Endothelial cell of umbilical vein (primary cell): ENCODE measurements at regions of chr2 and their contacts with region 1.

Region 1: DNA sequence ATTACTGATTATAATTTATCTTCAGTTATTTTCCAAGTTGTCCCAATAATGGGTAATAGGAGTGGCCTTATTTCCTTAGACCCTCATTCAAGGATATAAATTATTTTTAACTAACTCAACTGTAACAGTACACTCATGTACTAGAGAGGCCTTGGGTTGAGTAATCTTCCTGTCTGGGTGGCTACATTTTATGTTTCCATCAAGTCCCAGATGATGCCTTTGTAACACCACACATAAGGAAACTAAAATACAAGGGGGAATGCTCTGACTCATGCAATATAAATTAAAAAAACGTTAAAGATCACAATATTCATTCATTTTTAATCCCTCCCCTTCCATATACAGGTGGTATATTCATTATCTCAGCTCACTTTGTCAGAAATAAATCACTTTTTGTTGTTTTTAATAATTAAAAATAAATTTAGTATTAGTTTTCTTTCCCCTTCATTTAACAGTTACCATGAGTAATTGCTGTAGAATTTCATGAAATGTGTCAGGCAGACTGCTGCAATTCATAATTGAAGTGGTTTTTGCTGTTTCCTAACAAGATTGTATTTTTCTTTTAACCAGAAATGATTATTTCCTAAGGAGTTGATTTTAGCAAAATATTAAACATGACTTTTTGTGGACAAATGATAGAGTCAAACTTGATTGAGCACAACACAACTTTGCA is 1403.6 kb downstream of the SUCLG1 start:
- DNase-seq: peak; percentile 93
- H3K4me3 ChIP-seq: peak overlapping the region in 1 of 3 experiments; percentile 15
- H3K27ac ChIP-seq: peak overlapping the region; percentile 97
- H3K4me1 ChIP-seq: peaks cover 36% of the 10 kb centered on the region
- H3K27me3 ChIP-seq: no peaks in the 10 kb centered on the region
- CTCF ChIP-seq: no peak
- POLR2A ChIP-seq: no peak

Region 2: DNA sequence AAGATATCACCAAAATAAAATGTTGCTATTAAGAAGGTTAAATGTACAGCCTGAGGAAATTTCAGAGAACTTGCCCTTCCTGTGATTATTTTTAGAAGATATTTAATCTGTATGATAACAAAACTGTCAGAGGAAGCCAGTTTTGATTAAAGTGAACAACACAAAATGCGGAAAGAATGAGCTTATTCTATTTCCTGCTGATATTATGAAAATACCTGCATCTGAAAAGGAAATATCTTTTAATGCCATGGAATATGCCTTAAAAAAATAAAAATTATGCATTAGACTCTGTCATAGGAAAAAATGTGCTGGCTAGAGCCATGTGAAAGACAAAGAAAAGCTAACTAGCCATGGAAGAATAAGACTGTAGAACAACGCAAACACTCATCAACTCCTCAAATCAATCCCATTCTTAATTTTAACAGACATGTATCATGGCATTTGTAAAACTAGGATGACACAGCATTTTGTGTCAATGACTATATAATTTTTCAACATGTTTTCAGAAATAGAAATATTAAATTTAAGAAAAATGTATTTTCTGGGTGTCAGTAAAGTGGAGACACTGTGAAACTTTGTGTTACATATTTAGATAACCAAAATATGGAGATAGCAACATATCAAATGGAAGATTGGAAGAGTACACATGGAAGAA is 364.6 kb before region 1 on chr2:
- CTCF ChIA-PET with region 1: no interaction called
- POLR2A ChIA-PET with region 1: no interaction called
- dilution Hi-C with region 1: no loop called
- intact Hi-C with region 1: loop called (anchors 1 kb)
- DNase-seq: peak; percentile 93
- H3K4me3 ChIP-seq: no peak overlapping the region
- H3K27ac ChIP-seq: peak overlapping the region; percentile 68
- H3K4me1 ChIP-seq: peaks cover 34% of the 10 kb centered on the region
- H3K27me3 ChIP-seq: no peaks in the 10 kb centered on the region
- CTCF ChIP-seq: no peak
- POLR2A ChIP-seq: peak; percentile 41

Region 3: GRCh38 chr2:83103602-83104001 is 48.1 kb after region 1 on chr2:
- CTCF ChIA-PET with region 1: no interaction called
- POLR2A ChIA-PET with region 1: no interaction called
- dilution Hi-C with region 1: no loop called
- intact Hi-C with region 1: loop called (anchors 1 kb)
- DNase-seq: peak; percentile 91
- H3K4me3 ChIP-seq: no peak overlapping the region
- H3K27ac ChIP-seq: peak overlapping the region; percentile 86
- H3K4me1 ChIP-seq: peaks cover 24% of the 10 kb centered on the region
- H3K27me3 ChIP-seq: no peaks in the 10 kb centered on the region
- CTCF ChIP-seq: no peak
- POLR2A ChIP-seq: no peak

Region 4: GRCh38 chr2:83665894-83666293 is 610.4 kb after region 1 on chr2:
- CTCF ChIA-PET with region 1: no interaction called
- POLR2A ChIA-PET with region 1: no interaction called
- dilution Hi-C with region 1: no loop called
- intact Hi-C with region 1: loop called (anchors 10 kb)
- DNase-seq: peak; percentile 75
- H3K4me3 ChIP-seq: no peak overlapping the region
- H3K27ac ChIP-seq: peak overlapping the region; percentile 87
- H3K4me1 ChIP-seq: peaks cover 7% of the 10 kb centered on the region
- H3K27me3 ChIP-seq: no peaks in the 10 kb centered on the region
- CTCF ChIP-seq: no peak
- POLR2A ChIP-seq: no peak